CD4-positive, alpha-beta memory T cell (primary cell): ENCODE measurements at regions of chr4 and their contacts with region 1.

Region 1: GRCh38 chr4:2008875-2009703 is at the start of gene NELFA:
- DNase-seq: peak; percentile 95 to 97 (median 97)
- H3K4me3 ChIP-seq: peak within 1 kb of the TSS; percentile 76 to 94
- H3K4me3 Mint-ChIP-seq: peak within 1 kb of the TSS; percentile 92 to 96 (median 94)
- H3K27ac ChIP-seq: peak within 1 kb of the TSS; percentile 95
- H3K27ac Mint-ChIP-seq: peak within 1 kb of the TSS; percentile 94 to 98 (median 97)
- H3K4me1 ChIP-seq: peaks cover 27% of the 10 kb centered on the region
- H3K4me1 Mint-ChIP-seq: peaks cover 29 to 42% (median 31%) of the 10 kb centered on the region in 4 donors
- H3K27me3 ChIP-seq: no peaks in the 10 kb centered on the region
- H3K27me3 Mint-ChIP-seq: no peaks in the 10 kb centered on the region
- total RNA-seq, gene NELFA: 47.0 to 48.3 TPM

Region 2: DNA sequence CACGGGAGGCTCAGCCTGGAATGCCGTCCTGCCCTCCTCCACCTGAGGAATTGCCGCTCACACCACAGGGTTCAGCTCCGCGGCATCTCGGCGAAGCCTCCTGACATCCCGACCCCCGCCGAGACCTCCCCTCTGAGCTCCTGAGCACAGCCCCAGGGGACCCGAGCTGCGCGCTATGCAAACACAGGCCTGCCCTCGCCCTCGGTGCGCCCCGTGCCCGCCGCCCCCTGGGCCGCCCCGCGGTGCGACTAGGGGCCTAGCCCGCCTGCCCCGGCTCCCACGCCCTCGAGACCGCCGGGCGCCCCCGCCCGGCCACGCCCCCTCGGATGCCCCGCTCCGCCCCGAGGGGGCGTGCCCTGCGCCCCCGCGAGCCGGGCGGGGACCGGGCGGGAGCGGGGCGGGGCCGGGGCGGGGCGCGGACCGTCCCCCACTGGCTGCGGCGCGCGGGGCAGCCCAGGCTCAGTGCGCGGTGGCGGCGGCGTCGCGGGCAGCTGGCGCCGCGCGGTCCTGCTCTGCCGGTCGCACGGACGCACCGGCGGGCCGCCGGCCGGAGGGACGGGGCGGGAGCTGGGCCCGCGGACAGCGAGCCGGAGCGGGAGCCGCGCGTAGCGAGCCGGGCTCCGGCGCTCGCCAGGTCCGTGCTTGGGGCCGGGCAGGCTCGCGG is 216.1 kb before region 1 on chr4 and contains the start of gene FGFR3:
- CTCF ChIA-PET with region 1: no interaction called
- POLR2A ChIA-PET with region 1: no interaction called
- intact Hi-C with region 1: no loop called
- DNase-seq: peak in 3 of 5 donors; percentile 19 to 38 (median 21)
- H3K4me3 ChIP-seq: no peak within 1 kb of the TSS
- H3K4me3 Mint-ChIP-seq: peak within 1 kb of the TSS in 7 of 8 donors; percentile 25 to 72 (median 49)
- H3K27ac ChIP-seq: no peak within 1 kb of the TSS
- H3K27ac Mint-ChIP-seq: peak within 1 kb of the TSS in 1 of 7 donors; percentile 68
- H3K4me1 ChIP-seq: peaks cover 12% of the 10 kb centered on the region
- H3K4me1 Mint-ChIP-seq: no peaks in the 10 kb centered on the region
- H3K27me3 ChIP-seq: peaks cover 17% of the 10 kb centered on the region
- H3K27me3 Mint-ChIP-seq: peaks cover 5 to 7% of the 10 kb centered on the region in 2 donors
- total RNA-seq, gene FGFR3: 0.53 to 0.67 TPM

Region 3: GRCh38 chr4:1870578-1871443 is 138.3 kb before region 1 on chr4 and contains the start of gene NSD2:
- CTCF ChIA-PET with region 1: no interaction called
- POLR2A ChIA-PET with region 1: interaction called, 8 read pairs
- intact Hi-C with region 1: loop called (anchors 10 kb)
- DNase-seq: peak; percentile 84 to 89 (median 88)
- H3K4me3 ChIP-seq: peak within 1 kb of the TSS; percentile 47 to 84
- H3K4me3 Mint-ChIP-seq: peak within 1 kb of the TSS; percentile 86 to 97 (median 89)
- H3K27ac ChIP-seq: peak within 1 kb of the TSS; percentile 91
- H3K27ac Mint-ChIP-seq: peak within 1 kb of the TSS; percentile 95 to 99 (median 98)
- H3K4me1 ChIP-seq: peaks cover 36% of the 10 kb centered on the region
- H3K4me1 Mint-ChIP-seq: peaks cover 21 to 39% (median 32%) of the 10 kb centered on the region in 4 donors
- H3K27me3 ChIP-seq: no peaks in the 10 kb centered on the region
- H3K27me3 Mint-ChIP-seq: peaks cover 0 to 3% of the 10 kb centered on the region in 2 donors
- total RNA-seq, gene NSD2: 54.8 to 57.4 TPM

Region 4: DNA sequence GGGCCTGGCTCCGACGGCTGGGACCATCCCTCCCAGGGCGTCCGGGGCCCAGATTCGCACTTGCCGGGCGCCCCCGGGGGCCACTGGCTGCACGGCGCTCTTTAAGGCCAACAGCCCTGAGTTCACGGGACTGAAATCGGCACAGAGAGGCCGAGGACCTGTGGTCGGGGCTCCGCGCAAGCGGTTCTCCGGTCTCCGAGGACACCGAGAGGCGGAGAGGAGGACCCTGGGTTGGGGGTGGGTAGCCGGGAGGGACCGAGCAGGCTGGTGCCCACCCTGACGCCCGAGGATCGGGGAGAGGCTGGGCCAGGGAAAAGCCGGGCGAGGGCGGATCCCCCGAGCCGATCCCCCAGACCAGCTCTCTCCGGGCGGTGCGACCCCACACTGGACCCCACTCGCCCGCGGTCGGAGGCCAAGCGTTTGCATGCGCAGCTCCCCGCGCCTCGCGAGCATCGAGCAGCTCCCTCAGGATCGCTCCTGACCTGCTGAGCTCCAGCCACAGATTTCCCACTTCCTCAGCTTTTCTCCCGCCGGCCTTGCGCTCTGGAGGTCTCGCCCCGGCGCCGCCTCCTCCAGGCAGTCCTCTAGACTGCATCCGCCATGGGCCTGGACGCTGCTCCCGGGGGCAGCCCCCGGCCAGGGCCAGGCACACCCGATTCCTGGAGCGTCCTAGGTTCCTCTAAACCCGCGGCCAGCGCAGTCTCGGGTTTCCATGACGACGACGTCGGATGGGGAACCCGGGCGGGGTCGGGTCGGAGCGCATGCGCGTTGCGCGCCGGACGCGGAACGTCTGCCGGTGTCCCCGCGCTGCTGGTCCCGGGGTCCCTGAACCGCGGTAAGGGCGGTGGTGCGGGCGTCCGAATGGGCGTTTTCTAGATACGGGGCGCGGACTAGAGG is 32.4 kb after region 1 on chr4:
- CTCF ChIA-PET with region 1: no interaction called
- POLR2A ChIA-PET with region 1: interaction called, 9 read pairs
- intact Hi-C with region 1: loop called (anchors 1 kb)
- DNase-seq: peak; percentile 77 to 80 (median 78)
- H3K4me3 ChIP-seq: peak overlapping the region; percentile 14 to 74
- H3K4me3 Mint-ChIP-seq: peak overlapping the region; percentile 72 to 85 (median 80)
- H3K27ac ChIP-seq: peak overlapping the region; percentile 26
- H3K27ac Mint-ChIP-seq: peak overlapping the region in 5 of 7 donors; percentile 35 to 75 (median 57)
- H3K4me1 ChIP-seq: peaks cover 12% of the 10 kb centered on the region
- H3K4me1 Mint-ChIP-seq: peaks cover 0 to 7% (median 5%) of the 10 kb centered on the region in 4 donors
- H3K27me3 ChIP-seq: no peaks in the 10 kb centered on the region
- H3K27me3 Mint-ChIP-seq: peaks cover 9 to 17% of the 10 kb centered on the region in 2 donors

Region 5: GRCh38 chr4:2478239-2478638 is 469.1 kb after region 1 on chr4:
- CTCF ChIA-PET with region 1: no interaction called
- POLR2A ChIA-PET with region 1: no interaction called
- intact Hi-C with region 1: no loop called
- DNase-seq: no peak
- H3K4me3 ChIP-seq: no peak overlapping the region
- H3K4me3 Mint-ChIP-seq: peak overlapping the region in 6 of 8 donors; percentile 43 to 86 (median 60)
- H3K27ac ChIP-seq: no peak overlapping the region
- H3K27ac Mint-ChIP-seq: peak overlapping the region in 4 of 7 donors; percentile 19 to 77 (median 40)
- H3K4me1 ChIP-seq: peaks cover 97% of the 10 kb centered on the region
- H3K4me1 Mint-ChIP-seq: peaks cover 63 to 96% (median 75%) of the 10 kb centered on the region in 4 donors
- H3K27me3 ChIP-seq: no peaks in the 10 kb centered on the region
- H3K27me3 Mint-ChIP-seq: no peaks in the 10 kb centered on the region